CD4-positive, alpha-beta memory T cell (primary cell): ENCODE measurements at regions of chr12 and their contacts with region 1.

Region 1: GRCh38 chr12:27142101-27142721 is 59.8 kb upstream of the C12orf71 start:
- DNase-seq: peak in 4 of 5 donors; percentile 31 to 46 (median 36)
- H3K4me3 ChIP-seq: no peak overlapping the region
- H3K4me3 Mint-ChIP-seq: peak overlapping the region in 3 of 8 donors; percentile 33 to 46 (median 35)
- H3K27ac ChIP-seq: no peak overlapping the region
- H3K27ac Mint-ChIP-seq: no peak overlapping the region
- H3K4me1 ChIP-seq: peaks cover 9% of the 10 kb centered on the region
- H3K4me1 Mint-ChIP-seq: peaks cover 4 to 14% (median 9%) of the 10 kb centered on the region in 4 donors
- H3K27me3 ChIP-seq: no peaks in the 10 kb centered on the region
- H3K27me3 Mint-ChIP-seq: no peaks in the 10 kb centered on the region

Region 2: DNA sequence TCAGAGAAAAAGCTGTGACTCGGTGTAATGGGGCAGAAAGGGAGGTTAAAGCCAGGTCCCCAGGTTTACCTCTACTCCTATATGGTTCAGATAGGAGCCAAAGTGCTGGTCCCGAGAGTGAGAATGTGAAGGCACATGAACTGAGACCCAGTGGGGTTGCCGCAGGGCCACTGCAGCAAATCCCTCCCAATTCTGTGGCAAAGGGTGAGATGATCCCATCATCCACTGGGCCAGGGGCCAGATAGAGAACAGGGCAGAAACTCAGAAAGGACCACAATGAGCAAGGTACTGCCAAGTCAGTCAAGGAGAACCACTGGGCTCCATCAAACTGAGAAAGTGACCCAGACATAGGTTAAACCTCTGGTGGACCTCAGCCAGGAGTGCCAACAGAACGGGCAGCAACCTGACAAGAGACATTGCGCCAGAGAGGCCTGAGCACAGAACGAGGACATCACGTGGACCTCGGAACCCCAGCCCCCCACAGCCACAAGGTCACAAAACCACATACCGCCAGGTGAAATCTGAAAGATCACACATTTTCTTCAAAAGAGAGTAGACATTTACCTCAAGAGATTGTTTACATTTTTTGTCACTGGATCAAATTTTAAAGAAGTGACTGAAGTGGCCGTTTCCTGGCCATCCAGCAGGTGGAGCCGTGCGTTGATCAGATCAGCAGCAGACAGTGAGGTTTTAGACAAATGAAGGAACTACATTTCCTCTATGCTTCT is 288.7 kb before region 1 on chr12:
- CTCF ChIA-PET with region 1: interaction called, 3 read pairs
- POLR2A ChIA-PET with region 1: no interaction called
- intact Hi-C with region 1: loop called (anchors 1 kb)
- DNase-seq: peak; percentile 59 to 69 (median 67)
- H3K4me3 ChIP-seq: no peak overlapping the region
- H3K4me3 Mint-ChIP-seq: no peak overlapping the region
- H3K27ac ChIP-seq: no peak overlapping the region
- H3K27ac Mint-ChIP-seq: peak overlapping the region in 2 of 7 donors; percentile 10 to 14
- H3K4me1 ChIP-seq: peaks cover 4% of the 10 kb centered on the region
- H3K4me1 Mint-ChIP-seq: no peaks in the 10 kb centered on the region
- H3K27me3 ChIP-seq: no peaks in the 10 kb centered on the region
- H3K27me3 Mint-ChIP-seq: peaks cover 3 to 6% of the 10 kb centered on the region in 2 donors

Region 3: DNA sequence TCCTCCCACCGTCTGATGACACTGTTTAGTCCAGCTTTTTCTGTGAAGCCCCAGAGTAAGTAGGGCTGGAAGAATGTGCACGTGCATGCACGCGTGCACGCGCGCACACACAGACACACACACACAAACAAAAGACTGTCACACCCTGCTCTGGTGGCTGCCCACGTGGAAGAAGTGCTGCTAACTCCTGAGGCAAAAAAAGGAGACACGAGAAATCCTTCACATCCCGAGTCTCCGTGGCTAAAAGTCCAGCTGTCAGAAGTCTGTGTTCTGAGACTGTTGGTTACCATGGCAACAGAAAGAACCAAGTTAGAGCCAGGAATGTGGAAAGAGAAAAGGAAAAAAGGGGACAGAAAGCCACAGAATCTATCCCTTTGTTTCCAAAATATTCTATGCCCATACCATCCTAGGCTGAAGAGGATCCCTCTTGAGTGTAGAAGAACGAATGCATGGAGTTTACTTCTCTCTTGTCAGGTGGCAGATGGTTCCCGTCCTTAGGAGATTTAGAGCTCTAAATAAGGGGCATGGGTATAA is 58.3 kb before region 1 on chr12:
- CTCF ChIA-PET with region 1: no interaction called
- POLR2A ChIA-PET with region 1: no interaction called
- intact Hi-C with region 1: no loop called
- DNase-seq: no peak
- H3K4me3 ChIP-seq: no peak overlapping the region
- H3K4me3 Mint-ChIP-seq: no peak overlapping the region
- H3K27ac ChIP-seq: no peak overlapping the region
- H3K27ac Mint-ChIP-seq: no peak overlapping the region
- H3K4me1 ChIP-seq: no peaks in the 10 kb centered on the region
- H3K4me1 Mint-ChIP-seq: no peaks in the 10 kb centered on the region
- H3K27me3 ChIP-seq: no peaks in the 10 kb centered on the region
- H3K27me3 Mint-ChIP-seq: no peaks in the 10 kb centered on the region

Region 4: GRCh38 chr12:27237790-27238771 is 95.9 kb after region 1 on chr12:
- CTCF ChIA-PET with region 1: interaction called, 3 read pairs
- POLR2A ChIA-PET with region 1: no interaction called
- intact Hi-C with region 1: loop called (anchors 5 kb)
- DNase-seq: peak in 3 of 5 donors; percentile 6 to 31 (median 18)
- H3K4me3 ChIP-seq: no peak overlapping the region
- H3K4me3 Mint-ChIP-seq: peak overlapping the region in 6 of 8 donors; percentile 1 to 52 (median 8)
- H3K27ac ChIP-seq: peak overlapping the region; percentile 31
- H3K27ac Mint-ChIP-seq: peak overlapping the region; percentile 45 to 80 (median 71)
- H3K4me1 ChIP-seq: peaks cover 14% of the 10 kb centered on the region
- H3K4me1 Mint-ChIP-seq: peaks cover 17 to 29% (median 23%) of the 10 kb centered on the region in 4 donors
- H3K27me3 ChIP-seq: no peaks in the 10 kb centered on the region
- H3K27me3 Mint-ChIP-seq: peaks cover 0 to under 1% of the 10 kb centered on the region in 2 donors